ENCODE measurements at regions of chr1 and their contacts with region 1.

Region 1: GRCh38 chr1:209651148-209651547 is 1.1 kb downstream of the LAMB3 start:
- DNase-seq: peak; percentile 87 to 88
- H3K4me3 ChIP-seq: peak overlapping the region; percentile 76; the same call in 1 of the 2 replicates
- H3K27ac ChIP-seq: peak overlapping the region; percentile 98
- H3K4me1 ChIP-seq: peaks cover 93% of the 10 kb centered on the region
- H3K27me3 ChIP-seq: no peaks in the 10 kb centered on the region
- CTCF ChIP-seq: no peak

Region 2: GRCh38 chr1:209368864-209369598 is 282.1 kb before region 1 on chr1:
- CTCF ChIA-PET with region 1: no interaction called
- POLR2A ChIA-PET with region 1: interaction called, 7 read pairs
- intact Hi-C with region 1: loop called (anchors 10 kb)
- DNase-seq: peak in 1 of 2 experiments; percentile 42
- H3K4me3 ChIP-seq: no peak overlapping the region
- H3K27ac ChIP-seq: no peak overlapping the region; the same call in 1 of the 2 replicates
- H3K4me1 ChIP-seq: peaks cover 26% of the 10 kb centered on the region
- H3K27me3 ChIP-seq: no peaks in the 10 kb centered on the region
- CTCF ChIP-seq: no peak

Region 3: DNA sequence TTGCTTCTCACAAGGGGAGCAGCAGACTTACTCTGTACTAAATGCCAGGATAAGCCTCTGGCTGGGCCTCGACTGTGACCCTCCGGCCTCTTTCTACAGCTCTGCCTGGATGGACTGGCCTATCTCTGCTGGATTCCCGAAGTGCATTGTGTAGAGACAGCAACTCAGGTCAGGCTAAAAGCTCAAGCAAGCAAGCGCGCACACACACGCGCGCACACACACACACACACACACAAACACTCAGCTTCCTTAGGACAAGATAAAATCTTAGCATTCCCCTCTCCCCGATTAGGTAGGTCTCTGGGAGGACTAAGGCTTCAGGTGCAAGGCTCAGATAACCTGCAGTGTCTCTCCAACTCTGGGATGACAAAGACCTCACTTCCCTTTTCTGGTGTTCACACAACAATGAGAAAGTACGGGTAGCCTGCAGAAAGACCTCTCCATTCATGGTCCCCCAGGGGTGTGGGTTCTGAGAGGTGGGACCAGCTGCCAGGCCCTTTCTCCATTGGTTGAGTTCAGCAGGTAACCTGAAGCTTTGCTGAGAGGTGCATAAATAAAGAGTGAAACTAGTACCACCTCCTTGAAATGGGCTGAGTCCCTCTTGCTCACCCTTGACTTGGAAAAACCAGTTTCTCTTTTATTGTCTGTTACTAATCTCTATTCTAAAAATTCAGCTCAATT is 222.8 kb before region 1 on chr1:
- CTCF ChIA-PET with region 1: no interaction called
- POLR2A ChIA-PET with region 1: interaction called, 8 read pairs
- intact Hi-C with region 1: loop called (anchors 10 kb)
- DNase-seq: peak; percentile 89 to 97
- H3K4me3 ChIP-seq: peak overlapping the region; percentile 100
- H3K27ac ChIP-seq: peak overlapping the region; percentile 98
- H3K4me1 ChIP-seq: peaks cover 34% of the 10 kb centered on the region
- H3K27me3 ChIP-seq: no peaks in the 10 kb centered on the region
- CTCF ChIP-seq: no peak

Region 4: DNA sequence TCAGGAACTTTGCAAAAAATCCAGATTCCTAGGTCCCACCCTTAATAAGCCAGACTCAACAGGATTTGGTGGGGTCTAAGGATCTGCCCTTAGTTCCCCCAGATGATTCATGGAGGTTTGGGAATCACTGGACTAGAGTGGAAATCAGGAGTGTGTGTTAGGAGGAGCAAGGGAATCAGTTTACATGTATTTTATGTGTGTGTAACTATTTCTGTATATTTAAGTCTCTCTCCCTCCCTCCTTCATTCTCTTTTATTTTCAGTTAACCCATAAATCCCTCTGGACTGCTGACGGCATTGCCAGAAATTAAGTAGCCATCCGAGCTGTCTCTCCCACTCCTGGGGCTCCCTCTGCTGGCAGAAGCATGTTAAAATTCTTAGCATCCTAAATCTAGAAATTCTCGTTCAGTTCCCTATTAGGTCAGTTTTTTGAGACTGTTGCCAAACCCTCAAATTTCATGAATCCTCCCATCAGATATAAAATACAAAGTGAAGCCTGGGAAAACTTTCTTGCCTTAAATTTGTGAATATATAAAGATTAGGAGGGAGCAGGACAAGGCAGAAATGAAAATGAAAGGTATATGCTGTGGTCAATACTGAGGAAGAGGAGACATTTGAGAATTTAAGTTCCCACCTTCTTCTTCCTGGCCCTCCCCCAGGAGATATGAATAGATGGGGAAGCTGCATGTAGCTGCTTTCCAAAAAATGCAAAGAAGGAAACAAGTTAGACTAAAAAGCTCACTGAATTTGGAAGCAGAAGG is 41.8 kb after region 1 on chr1:
- CTCF ChIA-PET with region 1: interaction called, 5 read pairs
- POLR2A ChIA-PET with region 1: interaction called, 7 read pairs
- intact Hi-C with region 1: loop called (anchors 2 kb)
- DNase-seq: peak; percentile 59 to 66
- H3K4me3 ChIP-seq: no peak overlapping the region
- H3K27ac ChIP-seq: no peak overlapping the region
- H3K4me1 ChIP-seq: 0 out of 2 replicates have a peak, but pooled peaks cover 4% of the 10 kb centered on the region
- H3K27me3 ChIP-seq: no peaks in the 10 kb centered on the region
- CTCF ChIP-seq: peak; percentile 96

Region 5: DNA sequence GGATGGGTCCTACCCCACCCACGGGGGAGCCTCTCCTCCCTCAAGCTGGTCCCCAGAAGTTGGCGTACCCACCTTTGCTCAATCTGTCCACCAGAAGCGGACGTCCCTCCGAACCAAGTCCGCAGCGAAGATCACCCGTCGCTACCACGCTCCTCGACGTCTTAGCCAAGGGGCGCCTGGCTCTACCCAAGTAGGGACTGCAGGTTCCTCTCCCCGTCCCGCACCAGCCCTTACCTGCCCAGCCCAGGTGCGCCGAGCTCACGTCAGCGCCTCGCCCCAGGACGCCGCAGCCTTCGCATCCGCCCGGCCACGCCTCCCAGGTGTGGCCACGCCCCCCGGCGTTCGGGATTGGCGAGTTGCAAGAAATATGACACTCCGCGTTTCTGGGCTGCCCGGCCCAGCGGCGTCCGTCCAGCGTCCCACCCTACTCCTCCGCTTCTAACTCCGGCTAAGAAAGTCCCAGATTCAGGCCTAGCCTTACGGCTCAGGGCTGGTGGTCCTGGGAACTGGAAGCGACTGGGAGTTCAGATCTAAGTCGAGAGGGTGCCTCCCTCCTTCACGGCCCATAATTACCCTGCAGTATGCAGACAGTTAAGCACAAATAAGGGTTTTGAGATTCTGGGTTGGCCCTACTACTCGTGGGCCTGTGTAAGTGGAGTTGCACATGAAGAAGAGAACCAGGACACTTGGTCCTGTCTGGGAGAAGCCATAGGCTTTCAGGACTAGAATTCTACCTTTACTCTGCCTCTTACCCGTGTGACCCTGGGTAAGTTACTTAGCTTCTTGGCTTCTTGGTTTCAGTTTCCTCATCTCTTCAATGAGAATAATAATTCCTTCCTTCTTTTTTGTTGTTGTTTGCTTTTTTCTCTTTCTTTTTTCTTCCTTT is 155.0 kb after region 1 on chr1 and contains the start of gene IRF6:
- CTCF ChIA-PET with region 1: no interaction called
- POLR2A ChIA-PET with region 1: interaction called, 16 read pairs
- intact Hi-C with region 1: no loop called
- DNase-seq: peak; percentile 89 to 96
- H3K4me3 ChIP-seq: peak within 1 kb of the TSS; percentile 78
- H3K27ac ChIP-seq: peak within 1 kb of the TSS; percentile 80
- H3K4me1 ChIP-seq: peaks cover 41% of the 10 kb centered on the region
- H3K27me3 ChIP-seq: no peaks in the 10 kb centered on the region
- CTCF ChIP-seq: no peak
- total RNA-seq, gene IRF6: 46.5 and 50.9 TPM in 2 replicates

Region 6: DNA sequence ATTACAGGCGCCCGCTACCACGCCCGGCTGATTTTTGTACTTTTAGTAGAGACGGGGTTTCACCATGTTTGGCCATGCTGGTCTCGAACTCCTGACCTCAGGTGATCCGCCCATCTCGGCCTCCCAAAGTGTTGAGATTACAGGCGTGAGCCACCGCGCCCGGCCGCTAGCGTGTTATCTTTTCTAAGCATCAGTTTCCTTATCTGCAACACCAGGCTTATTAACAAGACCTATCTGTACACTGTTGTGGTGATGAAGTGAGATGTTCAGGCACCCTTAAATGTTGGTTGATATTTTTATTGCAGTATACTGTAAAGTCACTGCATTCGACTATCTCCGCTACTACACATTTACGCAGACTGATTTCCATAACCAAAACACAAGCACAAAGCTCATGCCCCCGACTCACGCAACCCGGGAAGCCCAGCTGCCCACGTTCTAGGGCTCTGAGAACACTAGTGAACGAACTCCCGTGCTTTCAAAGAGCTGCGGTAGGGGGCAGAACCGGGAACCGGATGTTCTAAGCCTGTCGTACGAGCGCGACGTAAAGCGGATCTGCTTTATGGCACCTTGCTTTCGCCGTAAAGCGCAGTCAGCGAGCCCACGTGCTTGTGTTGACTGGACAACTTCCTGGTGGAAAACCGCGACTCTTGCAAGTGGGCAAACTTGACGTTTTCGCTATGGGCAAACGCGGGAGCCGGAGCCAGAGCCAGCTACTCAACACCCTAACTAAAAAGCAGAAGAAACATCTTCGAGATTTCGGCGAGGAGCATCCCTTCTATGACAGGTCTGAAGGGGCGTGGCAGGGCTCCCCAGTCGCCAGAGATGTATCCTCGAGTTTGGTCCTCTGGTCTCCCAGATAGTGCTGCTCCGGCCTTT is 176.5 kb after region 1 on chr1 and contains the start of gene UTP25:
- CTCF ChIA-PET with region 1: no interaction called
- POLR2A ChIA-PET with region 1: no interaction called
- intact Hi-C with region 1: no loop called
- DNase-seq: peak; percentile 91 to 93
- H3K4me3 ChIP-seq: peak within 1 kb of the TSS; percentile 74
- H3K27ac ChIP-seq: peak within 1 kb of the TSS; percentile 51
- H3K4me1 ChIP-seq: peaks cover 18% of the 10 kb centered on the region
- H3K27me3 ChIP-seq: no peaks in the 10 kb centered on the region
- CTCF ChIP-seq: peak; percentile 73
- total RNA-seq, gene UTP25: 8.2 and 9.3 TPM in 2 replicates

Region 7: DNA sequence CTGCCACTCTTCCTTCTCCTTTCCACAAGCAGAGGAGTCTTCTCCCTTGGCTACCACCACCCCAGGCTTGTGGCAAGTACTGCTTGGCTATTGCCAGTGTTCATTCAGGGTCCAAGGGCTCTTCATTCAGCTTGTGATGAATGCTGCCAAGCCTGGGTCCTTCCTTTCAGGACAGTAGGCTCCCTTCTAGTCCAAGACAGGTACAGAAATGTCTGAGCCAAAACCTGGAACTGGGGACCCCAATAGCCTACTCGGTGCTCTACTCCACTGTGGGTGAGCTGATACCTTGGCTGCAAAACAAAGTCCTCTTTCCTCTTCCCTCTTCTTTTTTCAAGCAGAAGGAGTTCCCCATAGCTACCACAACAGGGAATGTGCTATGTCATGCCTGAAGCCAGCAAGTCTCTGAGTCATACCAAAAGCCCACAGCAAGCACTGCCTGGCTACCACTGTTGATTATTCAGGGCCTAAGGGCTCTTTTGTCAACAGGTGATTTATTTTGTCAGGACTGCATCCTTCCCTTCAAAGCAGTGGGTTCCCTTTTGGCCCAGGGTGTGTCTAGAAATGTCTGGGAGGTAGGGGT is 946.5 kb after region 1 on chr1:
- CTCF ChIA-PET with region 1: no interaction called
- POLR2A ChIA-PET with region 1: no interaction called
- intact Hi-C with region 1: loop called (anchors 5 kb)
- DNase-seq: peak; percentile 73 to 95
- H3K4me3 ChIP-seq: no peak overlapping the region; the same call in 1 of the 2 replicates
- H3K27ac ChIP-seq: peak overlapping the region; percentile 98
- H3K4me1 ChIP-seq: peaks cover 37% of the 10 kb centered on the region
- H3K27me3 ChIP-seq: no peaks in the 10 kb centered on the region
- CTCF ChIP-seq: no peak